Mammary epithelial cell (primary cell): ENCODE measurements at regions of chr20 and their contacts with region 1.

Region 1: DNA sequence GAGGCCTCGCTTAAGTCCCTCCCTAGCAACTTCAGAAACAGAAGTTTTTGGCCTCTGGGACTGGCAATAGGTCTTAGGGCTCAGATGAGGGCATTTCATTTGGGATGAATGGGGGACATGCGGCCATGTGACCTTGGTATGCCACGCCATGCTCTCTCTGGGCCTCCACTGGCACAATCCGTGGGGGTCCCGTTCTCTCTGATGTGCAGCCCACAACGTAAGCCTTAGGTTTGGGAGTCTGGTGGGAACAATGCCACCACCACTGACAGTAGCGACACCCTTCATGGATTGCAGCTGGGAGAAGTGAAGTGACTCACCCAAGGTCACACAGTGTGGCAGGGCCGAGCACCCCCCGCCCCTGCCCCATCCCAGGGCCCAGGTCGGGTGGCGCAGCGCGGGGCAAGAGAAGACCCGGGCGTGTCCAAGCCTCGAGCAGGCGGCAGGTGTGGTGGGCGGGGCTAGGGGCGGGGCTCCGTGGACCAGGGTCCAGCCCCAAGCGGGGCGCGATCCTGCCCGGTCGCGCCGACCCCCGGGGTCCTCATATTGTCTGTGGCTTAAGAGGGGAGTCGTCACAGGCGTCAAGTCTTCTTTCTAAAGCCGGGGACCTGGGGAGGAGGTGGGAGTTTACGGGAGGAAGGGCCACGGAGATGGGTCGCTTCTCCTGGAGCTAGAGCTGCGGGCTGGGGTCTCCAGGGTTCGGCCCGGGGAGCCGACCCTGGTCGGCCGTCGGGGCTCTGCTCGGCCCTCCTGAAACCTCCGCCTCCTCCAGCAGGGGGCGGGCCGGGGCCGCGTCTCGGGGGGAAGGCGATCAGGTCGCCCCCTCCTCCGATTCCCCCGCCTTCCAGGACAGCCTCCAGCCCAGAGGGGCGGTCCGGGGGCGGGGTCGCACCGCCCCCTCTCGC is 698 bp upstream of the CEBPB start:
- DNase-seq: peak; percentile 69
- H3K4me3 ChIP-seq: peak overlapping the region in 2 of 3 experiments; percentile 89 to 99
- H3K27ac ChIP-seq: peak overlapping the region; percentile 68
- H3K4me1 ChIP-seq: peaks cover 18% of the 10 kb centered on the region
- H3K27me3 ChIP-seq: no peaks in the 10 kb centered on the region
- CTCF ChIP-seq: peak; percentile 25 to 70

Region 2: DNA sequence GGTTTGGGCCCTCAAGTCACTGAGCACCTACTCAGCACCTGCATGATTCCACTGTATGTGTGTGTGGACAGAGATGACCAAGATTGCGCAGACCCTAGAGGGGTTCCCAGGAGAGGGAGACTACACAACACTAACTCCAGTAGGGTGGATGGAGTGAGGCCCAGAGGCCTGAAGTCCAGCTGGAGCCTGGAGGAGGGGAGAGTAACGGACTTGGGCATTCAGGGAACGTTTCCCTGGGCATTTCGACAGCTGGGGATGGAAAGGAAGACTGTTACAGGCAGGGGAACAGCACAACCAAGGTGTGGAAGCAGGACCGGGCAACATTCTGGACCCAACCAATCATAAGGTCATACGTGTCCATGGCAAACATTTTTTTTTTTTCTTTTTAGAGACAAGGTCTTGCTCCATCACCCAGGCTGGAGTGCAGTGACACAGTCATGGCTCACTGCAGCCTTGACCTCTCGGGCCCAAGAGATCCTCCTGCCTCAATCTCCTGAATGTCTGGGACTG is 10.4 kb before region 1 on chr20:
- CTCF ChIA-PET with region 1: interaction called, 21 read pairs
- dilution Hi-C with region 1: no loop called
- in situ Hi-C with region 1: no loop called
- intact Hi-C with region 1: no loop called
- DNase-seq: no peak
- H3K4me3 ChIP-seq: no peak overlapping the region
- H3K27ac ChIP-seq: no peak overlapping the region
- H3K4me1 ChIP-seq: no peaks in the 10 kb centered on the region
- H3K27me3 ChIP-seq: no peaks in the 10 kb centered on the region
- CTCF ChIP-seq: no peak

Region 3: DNA sequence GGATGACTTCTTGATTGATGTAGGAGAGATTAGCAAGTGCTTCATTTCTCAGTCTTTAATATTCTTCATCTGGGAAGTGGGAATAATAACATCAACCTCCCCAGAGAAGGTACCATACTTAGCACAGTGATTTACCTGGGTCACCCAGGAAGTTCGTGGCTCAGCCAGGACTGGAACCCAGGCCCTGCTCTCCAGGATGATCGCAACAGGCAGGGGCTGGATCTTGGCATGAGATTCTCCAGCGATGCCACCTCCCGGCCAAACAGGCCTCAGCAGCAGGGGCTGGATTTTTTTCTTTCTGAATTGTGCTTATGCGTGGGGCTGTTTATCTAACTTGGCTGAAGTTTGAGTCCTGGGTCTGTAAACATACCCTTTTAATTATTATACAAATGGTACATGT is 190.7 kb after region 1 on chr20:
- CTCF ChIA-PET with region 1: no interaction called
- dilution Hi-C with region 1: no loop called
- in situ Hi-C with region 1: no loop called
- intact Hi-C with region 1: loop called (anchors 1 kb)
- DNase-seq: peak; percentile 28
- H3K4me3 ChIP-seq: no peak overlapping the region
- H3K27ac ChIP-seq: no peak overlapping the region
- H3K4me1 ChIP-seq: peaks cover 18% of the 10 kb centered on the region
- H3K27me3 ChIP-seq: no peaks in the 10 kb centered on the region
- CTCF ChIP-seq: peak; percentile 50 to 75

Region 4: GRCh38 chr20:50509935-50510705 is 320.2 kb after region 1 on chr20 and contains the start of gene PTPN1:
- CTCF ChIA-PET with region 1: no interaction called
- dilution Hi-C with region 1: no loop called
- in situ Hi-C with region 1: no loop called
- intact Hi-C with region 1: loop called (anchors 5 kb)
- DNase-seq: peak; percentile 99
- H3K4me3 ChIP-seq: peak within 1 kb of the TSS; percentile 86 to 91 (median 90)
- H3K27ac ChIP-seq: peak within 1 kb of the TSS; percentile 94
- H3K4me1 ChIP-seq: peaks cover 26% of the 10 kb centered on the region
- H3K27me3 ChIP-seq: no peaks in the 10 kb centered on the region
- CTCF ChIP-seq: peak; percentile 15 to 36
- total RNA-seq, gene PTPN1: 43.5 to 90.8 TPM

Region 5: DNA sequence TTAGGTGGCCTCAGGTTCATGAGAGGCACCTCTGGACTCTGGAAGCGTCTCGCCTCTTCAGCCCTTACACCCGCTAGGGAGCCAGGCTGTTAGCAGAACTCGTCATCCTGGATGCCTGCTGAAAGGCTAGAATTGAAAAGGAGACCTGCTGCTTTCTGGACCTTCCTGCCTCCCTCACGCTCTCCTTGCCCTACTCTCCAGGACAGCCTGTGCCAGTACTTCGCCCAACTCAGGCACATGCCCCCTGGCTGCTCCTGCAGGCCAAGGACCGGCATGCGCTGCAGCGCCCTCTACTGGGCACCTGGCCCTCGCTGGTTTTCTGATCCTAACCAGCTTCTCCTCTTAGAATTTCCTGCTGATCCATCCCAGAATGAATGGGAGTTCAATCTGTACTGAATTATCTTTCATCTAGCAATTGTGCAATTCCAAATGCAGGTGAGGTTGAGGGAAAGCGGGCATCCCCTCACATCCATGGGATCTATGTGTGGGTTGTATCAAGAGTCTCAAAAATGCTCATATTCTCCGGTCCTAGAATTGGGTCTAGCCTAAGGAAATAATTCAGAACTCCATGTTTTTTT is 398.2 kb after region 1 on chr20:
- CTCF ChIA-PET with region 1: no interaction called
- dilution Hi-C with region 1: no loop called
- in situ Hi-C with region 1: loop called in 1 of 2 experiments (anchors 5 kb)
- intact Hi-C with region 1: no loop called
- DNase-seq: peak; percentile 54
- H3K4me3 ChIP-seq: no peak overlapping the region
- H3K27ac ChIP-seq: no peak overlapping the region
- H3K4me1 ChIP-seq: peaks cover 25% of the 10 kb centered on the region
- H3K27me3 ChIP-seq: no peaks in the 10 kb centered on the region
- CTCF ChIP-seq: peak; percentile 96 to 99

Region 6: GRCh38 chr20:50750145-50750671 is 560.3 kb after region 1 on chr20:
- CTCF ChIA-PET with region 1: no interaction called
- dilution Hi-C with region 1: no loop called
- in situ Hi-C with region 1: loop called in 1 of 2 experiments (anchors 25 kb)
- intact Hi-C with region 1: loop called (anchors 2 kb)
- DNase-seq: no peak
- H3K4me3 ChIP-seq: no peak overlapping the region
- H3K27ac ChIP-seq: no peak overlapping the region
- H3K4me1 ChIP-seq: peaks cover 29% of the 10 kb centered on the region
- H3K27me3 ChIP-seq: no peaks in the 10 kb centered on the region
- CTCF ChIP-seq: no peak